Naive thymus-derived CD4-positive, alpha-beta T cell (primary cell): ENCODE measurements at regions of chr10 and their contacts with region 1.

Region 1: DNA sequence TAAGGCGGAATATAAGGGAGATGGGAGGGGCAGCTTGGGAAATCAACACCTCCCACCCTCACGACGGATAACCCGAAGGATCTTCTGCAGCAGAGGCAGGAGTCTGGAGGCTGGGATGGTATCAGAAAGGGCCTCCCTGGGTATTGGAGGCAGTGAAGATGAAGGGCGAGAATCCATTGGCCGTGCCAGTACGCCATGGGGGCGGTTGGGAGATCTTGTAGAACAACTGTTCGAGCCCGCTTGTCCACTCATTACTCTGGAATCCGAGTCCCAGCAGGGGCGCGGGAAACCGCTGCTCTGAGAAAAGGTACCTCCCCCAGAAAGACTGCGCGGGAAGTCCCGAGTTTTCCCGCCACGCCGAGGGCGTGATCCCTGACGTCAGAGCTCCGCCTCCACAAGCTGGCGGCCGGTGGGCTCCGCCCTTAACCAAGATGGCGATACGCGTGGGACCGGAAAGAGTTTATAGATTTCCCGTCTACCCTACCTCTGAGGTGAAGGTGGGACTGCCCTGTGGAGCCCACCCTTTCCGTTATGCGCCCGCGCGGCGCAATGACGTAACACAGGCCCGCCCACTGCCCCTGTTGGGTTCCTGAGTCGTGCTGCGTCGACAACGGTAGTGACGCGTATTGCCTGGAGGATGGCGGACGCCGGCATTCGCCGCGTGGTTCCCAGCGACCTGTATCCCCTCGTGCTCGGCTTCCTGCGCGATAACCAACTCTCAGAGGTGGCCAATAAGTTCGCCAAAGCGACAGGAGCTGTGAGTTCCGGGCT is at the start of gene NOLC1:
- DNase-seq: peak; percentile 95 to 100 (median 100)
- ATAC-seq: peak; percentile 97
- H3K4me3 ChIP-seq: peak within 1 kb of the TSS; percentile 87
- H3K4me3 Mint-ChIP-seq: peak within 1 kb of the TSS; percentile 91 to 98 (median 96)
- H3K27ac ChIP-seq: peak within 1 kb of the TSS; percentile 94
- H3K27ac Mint-ChIP-seq: peak within 1 kb of the TSS; percentile 91 to 98 (median 96)
- H3K4me1 ChIP-seq: peaks cover 11 to 16% of the 10 kb centered on the region in 2 donors
- H3K4me1 Mint-ChIP-seq: peaks cover 28 to 58% (median 43%) of the 10 kb centered on the region in 7 donors
- H3K27me3 ChIP-seq: no peaks in the 10 kb centered on the region
- H3K27me3 Mint-ChIP-seq: peaks cover 0 to 4% (median 0%) of the 10 kb centered on the region in 5 donors
- total RNA-seq, gene NOLC1: 45.1 to 98.5 (median 58.8) TPM

Region 2: DNA sequence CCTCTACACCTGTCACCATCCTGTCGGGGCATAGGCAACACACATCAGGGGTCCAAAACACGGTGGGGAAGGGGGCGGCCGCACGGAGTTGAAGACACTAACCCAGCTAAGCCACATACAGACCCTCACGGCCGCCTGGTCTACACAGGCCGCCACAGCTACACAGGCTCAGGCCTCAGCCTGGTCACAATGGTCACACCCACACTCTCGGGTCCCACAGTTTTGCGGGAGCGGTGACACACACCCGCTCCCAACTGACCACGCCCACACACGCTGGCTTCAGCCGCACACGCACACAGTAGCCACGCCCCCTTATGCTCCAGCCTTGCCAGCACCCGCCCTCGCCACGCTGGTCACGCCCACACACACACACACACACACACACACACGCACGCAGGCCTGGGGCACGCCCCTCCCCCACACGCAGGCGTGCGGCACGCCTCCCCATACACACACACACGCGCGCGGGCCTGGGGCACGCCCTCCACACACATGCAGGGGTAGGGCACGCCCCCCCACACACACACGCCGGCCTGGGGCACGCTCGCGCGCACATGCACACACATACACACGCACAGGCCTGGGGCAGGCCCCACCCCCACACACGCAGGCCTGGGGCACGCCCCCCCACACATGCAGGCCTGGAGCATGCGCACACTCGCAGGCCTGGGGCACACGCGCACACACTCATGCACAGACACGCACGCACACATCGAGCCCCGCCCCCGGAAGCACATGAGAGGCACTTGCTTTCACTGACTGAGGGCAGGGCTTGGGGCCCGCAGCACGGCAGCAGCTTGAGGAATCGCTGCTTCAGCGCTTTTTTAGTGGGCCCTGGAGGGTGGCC is 321.4 kb before region 1 on chr10:
- CTCF ChIA-PET with region 1: no interaction called
- POLR2A ChIA-PET with region 1: no interaction called
- intact Hi-C with region 1: loop called in 1 of 2 experiments (anchors 1 kb)
- DNase-seq: peak; percentile 89 to 98 (median 95)
- ATAC-seq: peak; percentile 90
- H3K4me3 ChIP-seq: peak overlapping the region; percentile 66
- H3K4me3 Mint-ChIP-seq: peak overlapping the region; percentile 79 to 94 (median 88)
- H3K27ac ChIP-seq: peak overlapping the region; percentile 85
- H3K27ac Mint-ChIP-seq: peak overlapping the region; percentile 94 to 100 (median 99)
- H3K4me1 ChIP-seq: peaks cover 22 to 53% of the 10 kb centered on the region in 2 donors
- H3K4me1 Mint-ChIP-seq: peaks cover 41 to 59% (median 53%) of the 10 kb centered on the region in 7 donors
- H3K27me3 ChIP-seq: no peaks in the 10 kb centered on the region
- H3K27me3 Mint-ChIP-seq: peaks cover 0 to 4% (median 0%) of the 10 kb centered on the region in 5 donors

Region 3: GRCh38 chr10:101938316-101939281 is 213.4 kb before region 1 on chr10:
- CTCF ChIA-PET with region 1: no interaction called
- POLR2A ChIA-PET with region 1: no interaction called
- intact Hi-C with region 1: no loop called
- DNase-seq: no peak
- ATAC-seq: no peak
- H3K4me3 ChIP-seq: no peak overlapping the region
- H3K4me3 Mint-ChIP-seq: no peak overlapping the region
- H3K27ac ChIP-seq: no peak overlapping the region
- H3K27ac Mint-ChIP-seq: no peak overlapping the region
- H3K4me1 ChIP-seq: no peaks in the 10 kb centered on the region
- H3K4me1 Mint-ChIP-seq: peaks cover 6 to 26% (median 11%) of the 10 kb centered on the region in 7 donors
- H3K27me3 ChIP-seq: no peaks in the 10 kb centered on the region
- H3K27me3 Mint-ChIP-seq: no peaks in the 10 kb centered on the region

Region 4: DNA sequence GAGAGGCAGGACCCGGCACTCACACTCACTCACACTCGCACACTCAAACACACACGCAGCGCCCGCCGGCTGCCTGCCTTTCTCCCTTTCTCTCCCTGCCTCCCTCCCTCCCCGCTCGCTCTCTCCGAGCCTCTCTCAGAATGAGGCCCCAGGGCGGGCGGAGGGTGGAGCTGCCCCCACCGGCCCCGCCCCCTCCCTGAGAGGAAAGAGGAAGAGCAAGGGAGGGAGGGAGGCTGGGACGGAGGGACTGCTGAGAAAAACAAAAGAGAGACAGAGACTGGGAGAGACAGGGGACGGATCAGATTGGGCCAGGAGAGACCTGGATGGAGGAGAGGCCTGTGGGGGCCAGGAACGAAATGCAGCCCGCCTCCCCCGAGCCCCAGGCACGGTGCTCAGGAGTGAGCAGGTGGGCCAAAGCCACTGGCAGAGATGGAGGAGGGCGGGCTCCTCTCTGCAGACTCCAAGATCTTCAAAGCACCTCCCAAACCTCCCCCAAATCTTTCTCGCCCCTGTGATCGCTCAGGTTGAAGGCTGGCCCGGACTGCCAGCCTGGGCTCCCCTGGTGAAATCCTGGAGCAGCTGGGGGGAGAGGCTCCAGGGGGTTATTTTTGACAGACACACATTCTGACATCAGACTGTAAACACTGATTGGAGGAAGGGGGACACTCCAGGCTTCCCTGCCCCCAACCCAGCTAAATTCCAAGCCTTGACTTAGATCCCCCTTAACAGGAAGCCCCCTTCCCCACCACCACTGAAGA is 36.9 kb before region 1 on chr10:
- CTCF ChIA-PET with region 1: no interaction called
- POLR2A ChIA-PET with region 1: interaction called, 10 read pairs
- intact Hi-C with region 1: loop called (anchors 1 kb)
- DNase-seq: peak; percentile 61 to 83 (median 70)
- ATAC-seq: peak; percentile 86
- H3K4me3 ChIP-seq: peak overlapping the region; percentile 77
- H3K4me3 Mint-ChIP-seq: peak overlapping the region; percentile 84 to 97 (median 92)
- H3K27ac ChIP-seq: peak overlapping the region; percentile 97
- H3K27ac Mint-ChIP-seq: peak overlapping the region; percentile 80 to 98 (median 92)
- H3K4me1 ChIP-seq: peaks cover 49 to 58% of the 10 kb centered on the region in 2 donors
- H3K4me1 Mint-ChIP-seq: peaks cover 54 to 76% (median 67%) of the 10 kb centered on the region in 7 donors
- H3K27me3 ChIP-seq: no peaks in the 10 kb centered on the region
- H3K27me3 Mint-ChIP-seq: no peaks in the 10 kb centered on the region

Region 5: GRCh38 chr10:102167861-102168260 is 15.9 kb after region 1 on chr10:
- CTCF ChIA-PET with region 1: interaction called, 3 read pairs
- POLR2A ChIA-PET with region 1: interaction called, 5 read pairs
- intact Hi-C with region 1: loop called in 1 of 2 experiments (anchors 1 kb)
- DNase-seq: no peak
- ATAC-seq: no peak
- H3K4me3 ChIP-seq: no peak overlapping the region
- H3K4me3 Mint-ChIP-seq: peak overlapping the region in 1 of 10 donors; percentile 45
- H3K27ac ChIP-seq: no peak overlapping the region
- H3K27ac Mint-ChIP-seq: no peak overlapping the region
- H3K4me1 ChIP-seq: peaks cover 0 to 8% of the 10 kb centered on the region in 2 donors
- H3K4me1 Mint-ChIP-seq: peaks cover 0 to 20% (median 8%) of the 10 kb centered on the region in 7 donors
- H3K27me3 ChIP-seq: no peaks in the 10 kb centered on the region
- H3K27me3 Mint-ChIP-seq: peaks cover 0 to 5% (median 0%) of the 10 kb centered on the region in 5 donors

Region 6: GRCh38 chr10:102208311-102209035 is 56.5 kb after region 1 on chr10:
- CTCF ChIA-PET with region 1: no interaction called
- POLR2A ChIA-PET with region 1: no interaction called
- intact Hi-C with region 1: no loop called
- DNase-seq: no peak
- ATAC-seq: no peak
- H3K4me3 ChIP-seq: no peak overlapping the region
- H3K4me3 Mint-ChIP-seq: no peak overlapping the region
- H3K27ac ChIP-seq: no peak overlapping the region
- H3K27ac Mint-ChIP-seq: peak overlapping the region in 1 of 9 donors; percentile 30
- H3K4me1 ChIP-seq: no peaks in the 10 kb centered on the region
- H3K4me1 Mint-ChIP-seq: no peaks in the 10 kb centered on the region
- H3K27me3 ChIP-seq: no peaks in the 10 kb centered on the region
- H3K27me3 Mint-ChIP-seq: peaks cover 0 to 7% (median 0%) of the 10 kb centered on the region in 5 donors

Region 7: GRCh38 chr10:102432162-102432950 is 280.4 kb after region 1 on chr10 and contains the start of gene CUEDC2:
- CTCF ChIA-PET with region 1: no interaction called
- POLR2A ChIA-PET with region 1: interaction called, 4 read pairs
- intact Hi-C with region 1: loop called in 1 of 2 experiments (anchors 1 kb)
- DNase-seq: peak; percentile 86 to 97 (median 91)
- ATAC-seq: peak; percentile 98
- H3K4me3 ChIP-seq: peak within 1 kb of the TSS; percentile 96
- H3K4me3 Mint-ChIP-seq: peak within 1 kb of the TSS; percentile 81 to 96 (median 93)
- H3K27ac ChIP-seq: peak within 1 kb of the TSS; percentile 80
- H3K27ac Mint-ChIP-seq: peak within 1 kb of the TSS; percentile 90 to 97 (median 94)
- H3K4me1 ChIP-seq: peaks cover 28 to 49% of the 10 kb centered on the region in 2 donors
- H3K4me1 Mint-ChIP-seq: peaks cover 38 to 60% (median 48%) of the 10 kb centered on the region in 7 donors
- H3K27me3 ChIP-seq: no peaks in the 10 kb centered on the region
- H3K27me3 Mint-ChIP-seq: no peaks in the 10 kb centered on the region
- total RNA-seq, gene CUEDC2: 27.0 to 69.0 (median 31.9) TPM

Region 8: GRCh38 chr10:102713814-102714620 is 562.1 kb after region 1 on chr10 and contains the start of gene ARL3:
- CTCF ChIA-PET with region 1: no interaction called
- POLR2A ChIA-PET with region 1: no interaction called
- intact Hi-C with region 1: loop called in 1 of 2 experiments (anchors 5 kb)
- DNase-seq: peak; percentile 75 to 95 (median 89)
- ATAC-seq: peak; percentile 96
- H3K4me3 ChIP-seq: peak within 1 kb of the TSS; percentile 98
- H3K4me3 Mint-ChIP-seq: peak within 1 kb of the TSS; percentile 86 to 98 (median 94)
- H3K27ac ChIP-seq: peak within 1 kb of the TSS; percentile 92
- H3K27ac Mint-ChIP-seq: peak within 1 kb of the TSS; percentile 66 to 95 (median 90)
- H3K4me1 ChIP-seq: peaks cover 4 to 18% of the 10 kb centered on the region in 2 donors
- H3K4me1 Mint-ChIP-seq: peaks cover 26 to 52% (median 43%) of the 10 kb centered on the region in 7 donors
- H3K27me3 ChIP-seq: no peaks in the 10 kb centered on the region
- H3K27me3 Mint-ChIP-seq: no peaks in the 10 kb centered on the region
- total RNA-seq, gene ARL3: 1.3 to 5.1 (median 2.9) TPM